Activated CD4-positive, alpha-beta T cell treated with anti-CD3 and anti-CD28 coated beads for 36 hours (primary cell): ENCODE measurements at regions of chr2 and their contacts with region 1.

Region 1: GRCh38 chr2:28392297-28393113 is at the start of gene FOSL2:
- DNase-seq: peak; percentile 96
- ATAC-seq: peak; percentile 74
- H3K4me3 Mint-ChIP-seq: no peak within 1 kb of the TSS
- H3K27ac Mint-ChIP-seq: peak within 1 kb of the TSS; percentile 99
- H3K4me1 Mint-ChIP-seq: peaks cover 30% of the 10 kb centered on the region
- H3K27me3 Mint-ChIP-seq: no peaks in the 10 kb centered on the region
- total RNA-seq, gene FOSL2: 135 to 225 TPM

Region 2: GRCh38 chr2:27638037-27638637 is 754.4 kb before region 1 on chr2:
- CTCF ChIA-PET with region 1: no interaction called
- POLR2A ChIA-PET with region 1: no interaction called
- intact Hi-C with region 1: loop called in 1 of 2 experiments (anchors 5 kb)
- DNase-seq: peak; percentile 31
- ATAC-seq: peak; percentile 88
- H3K4me3 Mint-ChIP-seq: peak overlapping the region; percentile 50
- H3K27ac Mint-ChIP-seq: peak overlapping the region; percentile 95
- H3K4me1 Mint-ChIP-seq: peaks cover 38% of the 10 kb centered on the region
- H3K27me3 Mint-ChIP-seq: no peaks in the 10 kb centered on the region

Region 3: DNA sequence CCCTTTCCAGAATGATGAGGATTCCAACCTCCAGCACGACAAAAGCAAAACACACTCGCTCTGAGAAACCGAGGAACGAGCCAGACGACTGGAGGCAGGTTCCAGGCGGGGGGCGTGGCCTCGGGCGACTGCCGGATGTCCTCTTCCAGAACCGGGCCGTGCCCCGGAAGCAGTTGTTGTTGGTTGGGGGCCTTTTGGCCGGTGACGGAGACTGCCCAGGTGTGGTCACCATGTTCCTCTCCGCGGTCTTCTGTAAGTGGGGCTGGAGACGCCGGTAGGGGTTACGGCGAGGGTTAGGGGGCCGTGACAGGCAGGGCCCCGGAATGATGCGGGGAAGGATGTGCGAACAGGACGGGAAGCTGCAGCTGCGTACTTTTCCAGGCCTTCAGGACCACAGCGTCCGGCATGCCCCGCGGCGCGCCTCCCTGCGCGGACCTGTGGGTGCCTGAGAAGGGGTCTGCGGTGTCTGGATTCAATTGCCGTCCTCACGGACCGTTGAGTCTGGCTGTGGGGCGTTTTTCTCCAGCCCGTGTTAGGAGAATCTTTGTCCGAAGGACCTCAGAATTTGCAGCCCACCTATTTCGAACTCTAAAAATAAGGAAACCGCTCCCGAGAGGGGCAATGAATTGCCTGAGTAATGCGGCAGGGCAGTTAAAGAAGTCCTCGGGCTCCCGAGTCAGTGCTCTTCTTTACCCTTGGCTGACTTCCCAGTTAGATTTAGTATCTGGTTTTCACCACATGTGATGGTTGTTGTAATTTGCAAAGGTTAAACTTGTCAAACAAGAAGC is 620.8 kb before region 1 on chr2 and contains the start of gene MRPL33:
- CTCF ChIA-PET with region 1: no interaction called
- POLR2A ChIA-PET with region 1: no interaction called
- intact Hi-C with region 1: loop called in 1 of 2 experiments (anchors 1 kb)
- DNase-seq: peak; percentile 96
- ATAC-seq: peak; percentile 98
- H3K4me3 Mint-ChIP-seq: peak within 1 kb of the TSS; percentile 99
- H3K27ac Mint-ChIP-seq: peak within 1 kb of the TSS; percentile 99
- H3K4me1 Mint-ChIP-seq: peaks cover 42% of the 10 kb centered on the region
- H3K27me3 Mint-ChIP-seq: no peaks in the 10 kb centered on the region
- total RNA-seq, gene MRPL33: 44.7 to 68.0 TPM

Region 4: DNA sequence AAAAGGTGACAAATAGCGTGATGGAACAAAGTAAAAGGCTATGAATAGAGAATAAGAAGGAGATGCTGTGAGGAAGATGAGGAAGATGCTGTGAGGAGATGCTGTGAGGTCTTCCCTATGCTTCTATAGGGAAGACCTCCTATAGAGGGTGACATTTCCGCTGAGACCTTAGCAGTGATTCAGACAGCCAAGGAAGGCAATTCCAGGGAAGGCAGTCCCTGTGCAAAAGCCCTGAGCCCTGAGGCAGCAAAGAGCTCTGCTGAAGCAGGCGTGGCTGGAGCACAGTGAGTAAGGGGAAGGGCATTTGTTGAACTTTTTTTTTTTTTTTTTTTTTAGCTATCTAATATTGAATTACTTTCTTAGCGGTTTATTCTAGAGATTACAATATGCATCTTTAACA is 142.5 kb before region 1 on chr2:
- CTCF ChIA-PET with region 1: interaction called, 3 read pairs
- POLR2A ChIA-PET with region 1: no interaction called
- intact Hi-C with region 1: loop called (anchors 2 to 5 kb)
- DNase-seq: no peak
- ATAC-seq: no peak
- H3K4me3 Mint-ChIP-seq: no peak overlapping the region
- H3K27ac Mint-ChIP-seq: no peak overlapping the region
- H3K4me1 Mint-ChIP-seq: peaks cover 27% of the 10 kb centered on the region
- H3K27me3 Mint-ChIP-seq: no peaks in the 10 kb centered on the region

Region 5: GRCh38 chr2:28445448-28446258 is 53.1 kb after region 1 on chr2:
- CTCF ChIA-PET with region 1: interaction called, 5 read pairs
- POLR2A ChIA-PET with region 1: interaction called, 5 read pairs
- intact Hi-C with region 1: loop called (anchors 1 kb)
- DNase-seq: peak; percentile 85
- ATAC-seq: peak; percentile 70
- H3K4me3 Mint-ChIP-seq: peak overlapping the region; percentile 53
- H3K27ac Mint-ChIP-seq: peak overlapping the region; percentile 97
- H3K4me1 Mint-ChIP-seq: peaks cover 81% of the 10 kb centered on the region
- H3K27me3 Mint-ChIP-seq: no peaks in the 10 kb centered on the region

Region 6: DNA sequence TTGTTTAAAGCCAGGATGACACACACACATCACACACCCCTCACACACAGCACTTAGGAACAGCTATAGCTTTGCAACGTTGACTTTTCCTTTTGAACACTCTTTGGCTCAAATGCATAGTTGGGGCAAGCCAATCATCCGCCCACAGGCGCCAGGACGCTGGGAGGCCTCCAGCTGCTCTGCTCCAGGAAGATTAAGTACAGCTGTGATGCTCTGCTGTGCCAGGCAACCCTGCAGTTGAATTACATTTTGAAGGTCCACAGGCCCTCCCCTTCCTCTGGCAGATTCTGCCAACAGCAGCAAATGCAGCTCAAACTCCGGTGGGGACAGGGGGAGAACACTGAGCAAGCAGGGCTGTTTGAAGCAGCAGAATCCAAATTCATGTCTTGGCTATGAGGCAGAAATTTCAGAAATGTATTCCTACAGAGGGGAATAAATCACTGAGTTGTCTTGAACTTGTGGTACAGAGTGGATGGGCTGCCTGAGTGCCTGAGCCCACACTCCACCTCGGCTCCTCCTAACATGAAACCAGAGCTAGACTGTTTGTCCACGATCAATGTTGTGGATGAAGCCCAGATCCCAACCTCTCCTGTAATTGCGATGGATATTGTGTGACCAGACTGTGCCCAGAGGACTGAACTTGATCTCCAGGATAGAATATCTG is 272.7 kb after region 1 on chr2:
- CTCF ChIA-PET with region 1: no interaction called
- POLR2A ChIA-PET with region 1: no interaction called
- intact Hi-C with region 1: no loop called
- DNase-seq: no peak
- ATAC-seq: no peak
- H3K4me3 Mint-ChIP-seq: no peak overlapping the region
- H3K27ac Mint-ChIP-seq: no peak overlapping the region
- H3K4me1 Mint-ChIP-seq: no peaks in the 10 kb centered on the region
- H3K27me3 Mint-ChIP-seq: no peaks in the 10 kb centered on the region

Region 7: GRCh38 chr2:28870146-28870891 is 477.8 kb after region 1 on chr2 and contains the start of gene TRMT61B:
- CTCF ChIA-PET with region 1: no interaction called
- POLR2A ChIA-PET with region 1: no interaction called
- intact Hi-C with region 1: loop called in 1 of 2 experiments (anchors 5 kb)
- DNase-seq: peak; percentile 98
- ATAC-seq: peak; percentile 99
- H3K4me3 Mint-ChIP-seq: peak within 1 kb of the TSS; percentile 94
- H3K27ac Mint-ChIP-seq: peak within 1 kb of the TSS; percentile 97
- H3K4me1 Mint-ChIP-seq: peaks cover 25% of the 10 kb centered on the region
- H3K27me3 Mint-ChIP-seq: no peaks in the 10 kb centered on the region
- total RNA-seq, gene TRMT61B: 22.0 to 22.2 TPM